ENCODE measurements at regions of chr12 and their contacts with region 1.

Region 1: GRCh38 chr12:9634177-9634803 is 26.6 kb upstream of the KLRB1 start:
- DNase-seq: peak; percentile 59 to 87 (median 83)
- ATAC-seq: peak; percentile 95
- H3K4me3 ChIP-seq: no peak overlapping the region
- H3K4me3 Mint-ChIP-seq: peak overlapping the region; percentile 33
- H3K27ac ChIP-seq: peak overlapping the region in 1 of 2 experiments; percentile 23
- H3K27ac Mint-ChIP-seq: peak overlapping the region; percentile 92
- H3K4me1 ChIP-seq: peaks cover 43% of the 10 kb centered on the region
- H3K4me1 Mint-ChIP-seq: peaks cover 64% of the 10 kb centered on the region
- H3K27me3 ChIP-seq: no peaks in the 10 kb centered on the region
- H3K27me3 Mint-ChIP-seq: no peaks in the 10 kb centered on the region
- CTCF ChIP-seq: peak; percentile 93

Region 2: GRCh38 chr12:9673404-9674225 is 39.3 kb after region 1 on chr12:
- CTCF ChIA-PET with region 1: interaction called, 4 read pairs
- POLR2A ChIA-PET with region 1: no interaction called
- intact Hi-C with region 1: loop called (anchors 1 to 5 kb)
- DNase-seq: peak in 7 of 9 experiments; percentile 44 to 82 (median 63)
- ATAC-seq: peak; percentile 37
- H3K4me3 ChIP-seq: peak overlapping the region; percentile 50 to 68
- H3K4me3 Mint-ChIP-seq: peak overlapping the region; percentile 88
- H3K27ac ChIP-seq: peak overlapping the region; percentile 42 to 74
- H3K27ac Mint-ChIP-seq: peak overlapping the region; percentile 95
- H3K4me1 ChIP-seq: peaks cover 44% of the 10 kb centered on the region
- H3K4me1 Mint-ChIP-seq: peaks cover 76% of the 10 kb centered on the region
- H3K27me3 ChIP-seq: no peaks in the 10 kb centered on the region
- H3K27me3 Mint-ChIP-seq: no peaks in the 10 kb centered on the region
- CTCF ChIP-seq: no peak

Region 3: DNA sequence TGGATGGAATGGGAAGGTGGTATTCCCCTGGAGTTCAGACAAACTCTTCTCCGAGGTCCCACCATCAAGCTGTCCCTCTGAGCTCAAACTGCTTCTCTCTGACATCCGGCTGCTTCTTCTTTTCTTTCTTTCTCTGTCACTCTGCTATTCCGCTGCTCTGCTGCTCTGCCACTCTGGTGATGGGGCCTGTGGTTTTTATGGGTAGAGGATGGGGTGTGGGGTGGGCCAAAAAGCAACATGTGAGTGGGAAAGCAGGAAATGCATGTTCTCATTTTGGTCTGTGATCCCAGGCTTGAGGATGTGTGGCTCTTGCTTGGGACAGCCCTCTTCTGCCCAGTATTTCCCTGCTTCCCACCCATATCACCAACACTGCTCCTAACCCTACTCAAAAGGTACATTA is 68.0 kb after region 1 on chr12:
- CTCF ChIA-PET with region 1: interaction called, 145 read pairs
- POLR2A ChIA-PET with region 1: interaction called, 9 read pairs
- intact Hi-C with region 1: no loop called
- DNase-seq: peak in 8 of 9 experiments; percentile 41 to 82 (median 58)
- ATAC-seq: peak; percentile 72
- H3K4me3 ChIP-seq: peak overlapping the region; percentile 20 to 22
- H3K4me3 Mint-ChIP-seq: peak overlapping the region; percentile 56
- H3K27ac ChIP-seq: peak overlapping the region; percentile 47 to 78
- H3K27ac Mint-ChIP-seq: peak overlapping the region; percentile 94
- H3K4me1 ChIP-seq: peaks cover 46% of the 10 kb centered on the region
- H3K4me1 Mint-ChIP-seq: peaks cover 79% of the 10 kb centered on the region
- H3K27me3 ChIP-seq: no peaks in the 10 kb centered on the region
- H3K27me3 Mint-ChIP-seq: no peaks in the 10 kb centered on the region
- CTCF ChIP-seq: no peak

Region 4: DNA sequence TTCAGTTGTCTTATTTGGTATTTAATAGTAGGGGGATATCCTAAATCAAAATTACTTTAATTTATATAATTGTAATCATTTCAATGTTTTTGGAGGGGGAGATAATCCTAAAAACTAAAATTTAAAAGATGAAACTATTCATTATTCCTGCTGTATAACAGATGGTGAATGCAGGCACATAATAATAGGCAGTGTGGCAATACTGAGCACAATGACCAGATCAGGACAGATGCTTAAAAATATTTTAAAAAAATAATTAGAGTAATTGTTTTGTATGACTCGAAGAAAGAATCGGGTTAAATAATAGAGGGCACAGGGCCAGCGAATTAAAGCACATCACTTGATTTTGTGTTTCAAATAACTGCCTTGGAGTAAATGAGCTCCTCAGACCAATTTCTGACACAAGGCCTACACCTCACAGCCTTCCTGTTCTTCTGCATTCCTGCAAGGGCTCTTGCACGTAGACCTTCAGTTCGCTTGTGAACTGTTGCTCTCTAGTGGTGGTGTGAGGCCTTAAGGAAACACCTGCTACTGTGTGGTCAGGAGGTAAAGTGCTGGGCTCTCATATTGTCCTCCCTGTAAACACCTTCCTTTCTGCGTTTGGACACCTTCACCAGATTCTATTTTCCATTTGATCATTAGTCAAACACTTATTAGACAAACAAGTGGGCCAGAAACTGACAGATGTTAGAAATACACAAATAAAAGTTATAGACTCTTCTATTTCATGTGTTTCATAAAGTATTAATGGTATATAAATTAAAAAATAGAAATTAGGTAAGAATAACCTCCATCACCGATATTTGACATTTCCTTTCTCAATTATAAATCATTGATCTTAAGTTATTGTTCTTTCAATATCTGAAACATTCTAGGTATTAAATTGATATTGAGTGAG is 163.7 kb after region 1 on chr12:
- CTCF ChIA-PET with region 1: interaction called, 7 read pairs
- POLR2A ChIA-PET with region 1: no interaction called
- intact Hi-C with region 1: loop called (anchors 1 to 2 kb)
- DNase-seq: peak; percentile 37 to 91 (median 67)
- ATAC-seq: peak; percentile 95
- H3K4me3 ChIP-seq: no peak overlapping the region
- H3K4me3 Mint-ChIP-seq: no peak overlapping the region
- H3K27ac ChIP-seq: no peak overlapping the region
- H3K27ac Mint-ChIP-seq: peak overlapping the region; percentile 46
- H3K4me1 ChIP-seq: peaks cover 49% of the 10 kb centered on the region
- H3K4me1 Mint-ChIP-seq: peaks cover 45% of the 10 kb centered on the region
- H3K27me3 ChIP-seq: no peaks in the 10 kb centered on the region
- H3K27me3 Mint-ChIP-seq: no peaks in the 10 kb centered on the region
- CTCF ChIP-seq: peak; percentile 86